ENCODE measurements at regions of chr5 and their contacts with region 1.

Region 1: DNA sequence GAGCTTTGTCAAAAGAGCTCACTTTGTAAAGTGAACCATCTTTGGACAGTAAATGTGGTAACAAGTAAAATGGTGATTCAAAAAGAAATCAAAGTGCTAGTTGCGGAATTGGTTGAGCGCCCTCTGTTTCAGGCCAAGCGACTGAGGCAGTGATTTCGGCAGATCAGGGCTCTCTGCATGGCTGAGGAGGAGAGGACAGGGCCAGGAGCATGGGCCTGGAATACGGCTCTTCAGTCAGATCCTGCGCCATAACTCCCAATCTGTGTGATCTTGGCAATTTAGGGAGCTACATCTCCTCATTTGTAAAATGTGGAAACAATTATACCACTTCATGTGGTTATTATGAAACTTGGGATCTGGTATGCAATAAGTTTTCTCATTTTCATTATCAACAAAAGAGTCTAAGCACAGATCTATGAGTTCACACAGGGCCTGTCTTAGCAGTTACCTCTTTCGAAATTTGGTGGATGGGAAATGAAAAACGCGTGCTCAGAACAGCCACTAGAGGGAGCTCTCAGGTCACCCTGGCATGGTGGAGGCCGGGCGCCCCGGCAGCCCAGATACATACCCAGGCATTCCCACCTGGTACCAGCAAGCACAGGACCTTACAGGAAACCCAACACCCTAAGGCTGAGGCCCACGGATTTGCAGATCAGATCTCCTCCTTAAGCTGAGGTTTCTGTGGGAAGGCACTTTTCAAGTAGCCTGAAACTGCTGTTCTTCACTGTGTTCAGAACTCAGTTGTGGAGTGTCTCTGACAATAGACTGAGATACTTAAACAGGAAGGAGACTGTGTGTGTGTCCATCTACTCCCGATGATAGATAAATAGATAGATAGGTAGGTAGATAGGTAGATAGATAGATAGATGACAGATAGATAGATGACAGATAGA is 303.7 kb downstream of the RAB3C start:
- DNase-seq: peak; percentile 45 to 84
- ATAC-seq: peak; percentile 89 to 93 (median 91)
- H3K4me3 ChIP-seq: no peak overlapping the region
- H3K4me3 Mint-ChIP-seq: no peak overlapping the region
- H3K27ac ChIP-seq: no peak overlapping the region
- H3K27ac Mint-ChIP-seq: peak overlapping the region; percentile 20 to 21
- H3K4me1 ChIP-seq: peaks cover 4% of the 10 kb centered on the region
- H3K4me1 Mint-ChIP-seq: peaks cover 9 to 14% of the 10 kb centered on the region in 2 donors
- H3K27me3 ChIP-seq: no peaks in the 10 kb centered on the region
- H3K27me3 Mint-ChIP-seq: peaks cover 3 to 12% of the 10 kb centered on the region in 2 donors
- CTCF ChIP-seq: peak; percentile 94

Region 2: GRCh38 chr5:58871648-58872242 is 14.8 kb before region 1 on chr5:
- intact Hi-C with region 1: no loop called
- DNase-seq: peak in 1 of 2 donors; percentile 60
- ATAC-seq: peak in 1 of 3 donors; percentile 60
- H3K4me3 ChIP-seq: no peak overlapping the region
- H3K4me3 Mint-ChIP-seq: no peak overlapping the region
- H3K27ac ChIP-seq: no peak overlapping the region
- H3K27ac Mint-ChIP-seq: no peak overlapping the region
- H3K4me1 ChIP-seq: no peaks in the 10 kb centered on the region
- H3K4me1 Mint-ChIP-seq: no peaks in the 10 kb centered on the region
- H3K27me3 ChIP-seq: no peaks in the 10 kb centered on the region
- H3K27me3 Mint-ChIP-seq: peaks cover 11 to 26% of the 10 kb centered on the region in 2 donors
- CTCF ChIP-seq: peak; percentile 69

Region 3: DNA sequence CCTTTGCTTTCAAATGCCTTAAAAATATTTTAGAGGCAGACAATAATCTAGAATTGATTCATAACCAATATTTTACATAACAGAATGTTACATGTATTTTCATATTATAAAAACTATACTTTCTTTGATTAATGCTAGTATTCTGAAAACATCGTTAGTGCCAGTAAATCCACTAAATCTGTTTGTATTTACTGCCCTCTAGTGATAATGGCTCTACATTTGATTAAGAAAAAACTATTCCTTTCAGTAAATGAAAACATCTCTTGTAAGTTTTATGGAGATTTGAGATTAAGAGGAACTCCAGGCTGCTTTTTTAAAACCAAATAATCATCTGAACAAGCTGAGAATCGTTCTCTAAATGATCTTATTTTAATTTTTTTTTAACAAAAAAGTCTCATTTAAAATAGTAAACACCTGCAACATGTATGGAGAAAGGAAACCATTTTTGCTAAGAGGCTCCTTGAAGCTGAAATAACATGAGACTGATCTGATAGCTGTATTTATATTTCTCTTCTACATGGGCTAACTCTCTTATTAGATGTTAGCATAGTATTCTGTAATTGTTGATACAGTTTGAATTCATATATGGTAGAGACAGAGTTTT is 121.0 kb after region 1 on chr5:
- intact Hi-C with region 1: loop called (anchors 5 kb)
- DNase-seq: peak in 1 of 2 donors; percentile 36
- ATAC-seq: peak in 2 of 3 donors; percentile 18 to 41
- H3K4me3 ChIP-seq: no peak overlapping the region
- H3K4me3 Mint-ChIP-seq: no peak overlapping the region
- H3K27ac ChIP-seq: no peak overlapping the region
- H3K27ac Mint-ChIP-seq: peak overlapping the region; percentile 39 to 78
- H3K4me1 ChIP-seq: no peaks in the 10 kb centered on the region
- H3K4me1 Mint-ChIP-seq: peaks cover 56 to 73% of the 10 kb centered on the region in 2 donors
- H3K27me3 ChIP-seq: no peaks in the 10 kb centered on the region
- H3K27me3 Mint-ChIP-seq: no peaks in the 10 kb centered on the region
- CTCF ChIP-seq: peak; percentile 38

Region 4: DNA sequence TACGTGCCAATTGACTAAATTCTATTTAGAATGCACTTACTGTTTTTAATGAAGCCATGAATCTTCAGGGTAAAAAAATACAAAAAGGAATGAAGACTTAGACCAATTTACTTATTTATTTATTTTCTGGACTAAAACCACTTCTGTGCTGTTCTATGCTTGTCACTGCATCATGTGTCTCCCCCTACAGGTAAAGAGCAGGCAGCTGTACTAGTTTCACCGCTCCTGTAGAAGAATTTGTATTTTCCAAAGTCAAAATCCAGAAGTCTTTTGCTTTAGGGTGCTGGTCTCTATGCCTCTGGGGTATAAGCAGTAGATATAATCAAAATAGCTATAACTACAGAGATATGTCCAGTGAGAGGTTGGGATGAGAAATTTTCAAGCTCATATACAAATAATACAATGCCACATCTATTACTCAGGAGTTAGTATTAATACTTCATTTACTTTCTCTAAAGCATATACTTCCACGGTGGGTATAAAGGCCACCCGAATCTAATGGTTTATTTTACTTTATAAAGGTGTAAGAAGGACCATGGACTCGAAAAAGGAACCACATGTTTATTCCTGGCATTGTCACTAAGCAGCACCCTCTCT is 287.8 kb after region 1 on chr5:
- intact Hi-C with region 1: loop called (anchors 1 kb)
- DNase-seq: peak in 1 of 2 donors; percentile 81
- ATAC-seq: peak; percentile 86 to 93 (median 93)
- H3K4me3 ChIP-seq: no peak overlapping the region
- H3K4me3 Mint-ChIP-seq: no peak overlapping the region
- H3K27ac ChIP-seq: no peak overlapping the region
- H3K27ac Mint-ChIP-seq: peak overlapping the region in 1 of 2 donors; percentile 50
- H3K4me1 ChIP-seq: no peaks in the 10 kb centered on the region
- H3K4me1 Mint-ChIP-seq: peaks cover 4 to 14% of the 10 kb centered on the region in 2 donors
- H3K27me3 ChIP-seq: no peaks in the 10 kb centered on the region
- H3K27me3 Mint-ChIP-seq: no peaks in the 10 kb centered on the region
- CTCF ChIP-seq: peak; percentile 90

Region 5: GRCh38 chr5:59367791-59368394 is 481.3 kb after region 1 on chr5:
- intact Hi-C with region 1: loop called (anchors 5 kb)
- DNase-seq: peak; percentile 30 to 69
- ATAC-seq: peak in 2 of 3 donors; percentile 71 to 77
- H3K4me3 ChIP-seq: no peak overlapping the region
- H3K4me3 Mint-ChIP-seq: no peak overlapping the region
- H3K27ac ChIP-seq: no peak overlapping the region
- H3K27ac Mint-ChIP-seq: no peak overlapping the region
- H3K4me1 ChIP-seq: no peaks in the 10 kb centered on the region
- H3K4me1 Mint-ChIP-seq: no peaks in the 10 kb centered on the region
- H3K27me3 ChIP-seq: no peaks in the 10 kb centered on the region
- H3K27me3 Mint-ChIP-seq: peaks cover 0 to 4% of the 10 kb centered on the region in 2 donors
- CTCF ChIP-seq: peak; percentile 77

Region 6: DNA sequence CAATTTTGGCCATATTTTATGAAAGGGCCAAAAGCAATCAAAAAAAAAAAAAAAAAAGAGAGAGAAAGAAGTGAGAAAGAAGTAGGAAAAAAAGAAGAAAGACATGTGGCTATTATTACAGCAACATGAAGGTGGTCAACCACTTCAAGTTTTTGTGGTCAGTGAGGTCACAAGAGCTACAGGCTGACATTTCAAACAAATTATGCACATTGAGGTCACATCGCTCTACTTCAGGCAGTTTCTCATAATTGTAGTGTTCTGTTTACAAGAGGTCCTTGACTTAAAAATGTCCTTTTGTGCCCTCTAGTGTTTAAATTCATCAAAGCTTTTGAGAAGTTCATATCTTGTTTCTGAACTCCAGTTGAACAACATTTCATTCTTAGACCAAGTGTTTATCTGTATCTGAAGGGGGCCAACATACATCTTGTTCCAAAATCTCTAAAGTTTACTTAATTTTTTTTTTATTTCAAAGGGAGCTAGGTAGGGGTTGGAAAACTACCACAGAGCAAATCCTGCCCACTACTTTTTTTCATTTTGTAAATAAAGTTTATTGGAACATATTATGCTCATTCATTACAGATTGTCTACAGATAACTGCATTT is 493.9 kb after region 1 on chr5:
- intact Hi-C with region 1: loop called (anchors 5 kb)
- DNase-seq: peak in 1 of 2 donors; percentile 65
- ATAC-seq: peak; percentile 90 to 97 (median 96)
- H3K4me3 ChIP-seq: no peak overlapping the region
- H3K4me3 Mint-ChIP-seq: peak overlapping the region; percentile 69
- H3K27ac ChIP-seq: no peak overlapping the region
- H3K27ac Mint-ChIP-seq: peak overlapping the region; percentile 66 to 74
- H3K4me1 ChIP-seq: no peaks in the 10 kb centered on the region
- H3K4me1 Mint-ChIP-seq: peaks cover 0 to 6% of the 10 kb centered on the region in 2 donors
- H3K27me3 ChIP-seq: no peaks in the 10 kb centered on the region
- H3K27me3 Mint-ChIP-seq: peaks cover 0 to 3% of the 10 kb centered on the region in 2 donors
- CTCF ChIP-seq: peak; percentile 59

Region 7: DNA sequence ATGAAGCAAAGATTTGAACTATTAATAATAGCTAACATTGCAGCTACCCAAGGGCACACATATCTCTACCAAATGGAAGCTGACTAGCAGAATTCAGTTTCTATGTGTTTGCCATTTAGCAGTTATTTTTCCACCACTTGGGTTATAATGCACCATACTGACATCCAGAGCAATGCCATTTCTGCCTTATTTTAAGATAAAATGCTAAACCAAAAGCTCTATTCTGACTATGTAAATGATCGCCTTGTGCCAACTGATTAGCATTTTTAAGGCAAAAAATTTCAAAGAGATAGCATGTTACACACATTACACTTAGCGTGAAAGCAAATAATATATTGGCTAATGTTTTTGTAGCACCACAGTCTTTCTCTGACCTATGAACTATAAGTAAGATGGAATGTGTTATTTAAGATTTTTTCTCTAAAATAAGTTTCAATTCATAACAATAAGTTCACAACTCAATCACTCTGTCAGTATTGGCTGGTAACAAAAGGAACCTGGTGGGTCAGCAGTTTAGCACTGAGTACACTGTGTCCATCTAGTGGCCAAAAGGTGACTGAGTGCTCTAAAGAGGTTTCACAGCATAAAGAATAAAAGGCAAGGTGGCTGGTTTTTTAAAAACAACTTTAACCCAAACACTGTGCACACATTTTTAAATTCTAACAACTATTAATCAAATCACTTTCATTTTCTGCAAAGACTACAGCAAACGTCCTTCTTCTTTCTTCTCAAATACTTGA is 563.5 kb after region 1 on chr5:
- intact Hi-C with region 1: no loop called
- DNase-seq: no peak
- ATAC-seq: no peak
- H3K4me3 ChIP-seq: no peak overlapping the region
- H3K4me3 Mint-ChIP-seq: no peak overlapping the region
- H3K27ac ChIP-seq: no peak overlapping the region
- H3K27ac Mint-ChIP-seq: no peak overlapping the region
- H3K4me1 ChIP-seq: no peaks in the 10 kb centered on the region
- H3K4me1 Mint-ChIP-seq: no peaks in the 10 kb centered on the region
- H3K27me3 ChIP-seq: no peaks in the 10 kb centered on the region
- H3K27me3 Mint-ChIP-seq: peaks cover 0 to 6% of the 10 kb centered on the region in 2 donors
- CTCF ChIP-seq: no peak

Region 8: DNA sequence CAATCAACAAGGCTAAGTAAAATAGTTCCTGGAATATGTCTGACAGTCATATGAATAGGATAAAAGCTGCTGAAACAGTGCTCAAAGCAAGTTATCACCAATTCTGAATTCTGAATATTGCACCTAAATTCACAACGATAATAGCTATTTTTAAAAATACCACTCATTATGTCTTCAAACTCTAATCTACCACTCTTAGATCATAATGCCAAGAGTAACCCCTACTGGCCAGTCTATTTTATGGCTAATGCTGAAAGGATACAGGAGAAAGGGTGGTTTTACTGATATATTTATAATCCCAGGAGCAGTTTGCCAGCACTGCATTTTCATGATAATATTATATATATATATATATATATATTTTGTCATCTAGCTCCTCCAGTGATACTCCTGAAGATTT is 774.2 kb after region 1 on chr5:
- intact Hi-C with region 1: loop called (anchors 10 kb)
- DNase-seq: no peak
- ATAC-seq: peak in 1 of 3 donors; percentile 43
- H3K4me3 ChIP-seq: no peak overlapping the region
- H3K4me3 Mint-ChIP-seq: no peak overlapping the region
- H3K27ac ChIP-seq: no peak overlapping the region
- H3K27ac Mint-ChIP-seq: no peak overlapping the region
- H3K4me1 ChIP-seq: peaks cover 8% of the 10 kb centered on the region
- H3K4me1 Mint-ChIP-seq: peaks cover 42 to 43% of the 10 kb centered on the region in 2 donors
- H3K27me3 ChIP-seq: no peaks in the 10 kb centered on the region
- H3K27me3 Mint-ChIP-seq: no peaks in the 10 kb centered on the region
- CTCF ChIP-seq: no peak